Activated B cell treated with CpG ODN at 0.5 μM for 24 hours (primary cell): ENCODE measurements at regions of chr3 and their contacts with region 1.

Region 1: GRCh38 chr3:119588112-119588511 is 8.8 kb downstream of the ADPRH start:
- DNase-seq: no peak
- ATAC-seq: peak; percentile 60
- H3K4me3 Mint-ChIP-seq: peak overlapping the region; percentile 50
- H3K27ac Mint-ChIP-seq: peak overlapping the region; percentile 73
- H3K4me1 Mint-ChIP-seq: peaks cover 34% of the 10 kb centered on the region
- H3K27me3 Mint-ChIP-seq: no peaks in the 10 kb centered on the region
- CTCF ChIP-seq: no peak

Region 2: DNA sequence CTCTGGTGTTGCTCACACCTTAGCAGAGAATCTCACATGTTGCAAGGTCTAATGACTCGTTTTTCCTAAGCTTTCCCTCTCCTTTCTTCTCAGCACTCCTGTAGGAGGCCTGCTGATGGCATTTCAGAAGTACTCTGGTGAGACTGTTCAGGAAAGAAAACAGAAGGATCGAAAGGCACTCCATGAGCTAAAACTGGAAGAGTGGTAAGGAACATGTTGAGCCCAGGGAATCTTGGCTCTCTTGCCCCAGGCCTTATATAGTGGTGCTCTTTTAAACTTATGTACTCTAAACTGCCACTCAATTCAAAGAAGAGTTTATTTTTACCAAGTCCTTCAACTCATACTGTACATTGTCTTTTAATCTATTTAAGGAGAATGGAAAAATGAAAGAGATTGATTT is 71.0 kb before region 1 on chr3:
- CTCF ChIA-PET with region 1: no interaction called
- POLR2A ChIA-PET with region 1: interaction called, 11 read pairs
- intact Hi-C with region 1: no loop called
- DNase-seq: no peak
- ATAC-seq: no peak
- H3K4me3 Mint-ChIP-seq: no peak overlapping the region
- H3K27ac Mint-ChIP-seq: no peak overlapping the region
- H3K4me1 Mint-ChIP-seq: peaks cover 12% of the 10 kb centered on the region
- H3K27me3 Mint-ChIP-seq: no peaks in the 10 kb centered on the region
- CTCF ChIP-seq: no peak